Sciatic nerve (tissue), 2 donors: ENCODE measurements at regions of chr9 and their contacts with region 1.

Region 1: DNA sequence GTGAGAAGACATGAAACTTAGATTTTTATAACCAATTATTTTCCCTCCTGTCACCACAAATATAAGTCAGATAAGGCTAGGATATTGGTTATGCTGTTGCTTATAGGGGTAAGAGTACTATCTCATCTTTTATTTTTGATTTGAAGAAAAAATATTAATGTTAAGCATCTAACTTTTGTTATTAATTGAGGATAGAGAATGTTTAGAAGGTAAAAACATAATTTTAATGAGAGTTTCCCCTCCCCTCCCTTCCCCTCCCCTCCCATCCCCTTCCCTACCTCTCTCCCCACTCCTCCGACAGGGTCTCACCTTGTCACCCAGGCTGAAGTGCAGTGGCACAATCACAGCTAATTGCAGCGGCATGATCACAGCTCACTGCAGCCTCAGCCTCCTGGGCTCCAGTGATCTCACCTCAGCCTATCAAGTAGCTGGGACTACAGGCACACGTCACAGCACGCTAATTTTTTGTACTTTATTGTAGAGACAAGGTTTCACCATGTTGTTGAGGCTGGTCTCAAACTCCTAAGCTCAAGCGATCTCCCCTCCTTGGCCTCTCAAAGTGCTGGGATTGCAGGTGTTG is 86.7 kb downstream of the RIC1 start:
- DNase-seq: no peak
- ATAC-seq: no peak

Region 2: GRCh38 chr9:5665059-5665458 is 50.6 kb before region 1 on chr9:
- intact Hi-C with region 1: loop called (anchors 2 kb)
- DNase-seq: no peak
- ATAC-seq: no peak